GM13976 (cell line): ENCODE measurements at regions of chrX and their contacts with region 1.

Region 1: GRCh38 chrX:40778861-40779575 is 43.7 kb upstream of the MED14 start:
- DNase-seq: no peak
- CTCF ChIP-seq: no peak

Region 2: GRCh38 chrX:40573763-40574162 is 205.3 kb before region 1 on chrX:
- in situ Hi-C with region 1: loop called (anchors 25 kb)
- DNase-seq: no peak
- CTCF ChIP-seq: peak; percentile 58